CD4-positive, alpha-beta T cell (primary cell): ENCODE measurements at regions of chr5 and their contacts with region 1.

Region 1: DNA sequence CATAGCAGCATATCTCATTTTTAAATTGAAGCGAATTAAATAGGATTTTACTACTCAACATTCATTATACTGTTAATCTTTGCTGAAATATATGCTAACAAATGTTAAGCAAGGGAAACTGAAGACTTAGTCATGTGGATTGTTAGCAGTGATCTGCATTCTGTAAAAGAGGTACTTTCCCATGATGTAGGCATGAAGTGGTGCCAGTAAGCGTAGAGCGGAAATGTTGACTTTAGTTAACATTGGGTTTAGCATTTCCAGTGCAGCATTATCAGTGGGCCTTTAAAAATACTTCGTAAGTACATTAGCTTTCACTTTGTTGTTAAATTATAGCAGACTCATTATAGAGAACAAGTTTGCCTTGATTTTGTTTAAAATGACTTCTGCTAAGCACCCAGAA is 130.3 kb downstream of the CDC42SE2 start:
- DNase-seq: peak in 7 of 14 experiments; percentile 32 to 91 (median 54)
- ATAC-seq: peak; percentile 95
- H3K4me3 ChIP-seq: peak overlapping the region; percentile 2
- H3K4me3 Mint-ChIP-seq: peak overlapping the region; percentile 55
- H3K27ac ChIP-seq: peak overlapping the region; percentile 85 to 92
- H3K27ac Mint-ChIP-seq: peak overlapping the region; percentile 97
- H3K4me1 ChIP-seq: peaks cover 54% of the 10 kb centered on the region
- H3K4me1 Mint-ChIP-seq: peaks cover 95% of the 10 kb centered on the region
- H3K27me3 ChIP-seq: no peaks in the 10 kb centered on the region
- H3K27me3 Mint-ChIP-seq: no peaks in the 10 kb centered on the region
- CTCF ChIP-seq: no peak

Region 2: DNA sequence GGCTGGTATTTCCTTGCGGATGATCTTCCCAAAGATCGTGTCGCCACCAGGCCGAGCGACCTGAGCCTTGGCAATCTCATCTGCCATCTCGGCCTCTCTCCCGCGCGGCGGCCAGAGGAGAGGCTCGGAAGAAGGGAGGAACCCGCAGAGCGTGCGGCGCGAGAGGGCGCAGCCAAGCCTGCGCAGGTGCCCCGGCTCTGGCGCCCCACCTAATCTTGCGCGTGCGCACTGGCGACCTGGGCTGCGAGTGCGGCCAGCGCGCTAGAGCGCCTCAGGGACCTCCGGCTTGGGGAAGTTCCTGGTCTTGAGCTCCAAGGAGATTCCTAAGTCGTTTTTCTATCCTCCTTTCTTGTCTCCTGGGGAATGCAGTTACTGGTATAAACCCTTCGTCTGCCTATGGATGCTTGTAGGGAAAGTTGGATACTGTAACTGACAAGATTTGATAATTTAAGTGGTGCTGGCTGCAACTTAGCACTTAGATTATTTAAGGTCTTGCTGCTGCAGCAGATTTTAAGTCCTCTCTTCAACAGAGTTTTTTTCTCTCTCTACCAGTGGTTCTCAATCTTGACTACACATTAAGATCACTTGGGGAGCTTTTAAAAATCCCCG is 228.9 kb before region 1 on chr5 and contains the start of gene HINT1:
- CTCF ChIA-PET with region 1: interaction called, 3 read pairs
- POLR2A ChIA-PET with region 1: interaction called, 7 read pairs
- intact Hi-C with region 1: loop called in 1 of 2 experiments (anchors 5 kb)
- DNase-seq: peak; percentile 81 to 97 (median 92)
- ATAC-seq: peak; percentile 84
- H3K4me3 ChIP-seq: peak within 1 kb of the TSS; percentile 86
- H3K4me3 Mint-ChIP-seq: peak within 1 kb of the TSS; percentile 97
- H3K27ac ChIP-seq: peak within 1 kb of the TSS; percentile 92 to 93
- H3K27ac Mint-ChIP-seq: peak within 1 kb of the TSS; percentile 88
- H3K4me1 ChIP-seq: peaks cover 28% of the 10 kb centered on the region
- H3K4me1 Mint-ChIP-seq: peaks cover 63% of the 10 kb centered on the region
- H3K27me3 ChIP-seq: no peaks in the 10 kb centered on the region
- H3K27me3 Mint-ChIP-seq: no peaks in the 10 kb centered on the region
- CTCF ChIP-seq: peak; percentile 37
- total RNA-seq, gene HINT1: 257 to 263 TPM

Region 3: DNA sequence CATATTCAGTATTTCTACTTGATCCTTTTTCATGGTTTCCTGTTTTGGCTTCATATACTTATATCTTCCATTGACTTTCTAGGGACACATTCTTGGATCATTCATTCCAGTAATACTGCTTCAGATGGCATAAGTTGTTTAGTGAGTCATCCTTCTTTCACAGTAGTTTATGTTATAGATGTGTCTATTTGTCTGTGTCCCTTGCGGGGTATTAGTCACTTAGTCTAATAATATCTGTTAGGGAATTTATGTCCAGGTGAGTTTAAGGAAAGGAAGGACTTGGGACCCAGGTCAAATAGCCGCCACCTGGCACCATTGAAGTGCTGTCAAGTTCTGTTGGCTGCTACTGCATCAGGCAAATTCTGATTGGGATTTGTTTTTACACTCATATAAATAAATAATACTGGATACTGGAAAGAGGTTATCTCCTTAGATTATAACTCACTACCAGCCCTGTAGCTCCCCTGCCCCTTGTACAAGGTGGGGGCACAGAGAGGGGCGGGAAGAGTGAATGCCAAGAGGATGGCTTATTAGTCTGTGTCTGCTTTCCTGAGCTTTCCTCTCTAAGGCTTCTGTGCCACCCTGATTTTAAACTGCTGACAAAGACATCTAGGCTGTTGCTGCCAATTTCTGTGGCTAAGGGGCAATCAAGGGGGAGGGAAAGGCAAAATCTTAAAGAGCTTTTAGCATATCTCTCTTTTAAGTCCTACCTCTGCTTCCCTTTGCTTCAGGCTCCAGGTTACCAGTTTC is 65.4 kb before region 1 on chr5:
- CTCF ChIA-PET with region 1: no interaction called
- POLR2A ChIA-PET with region 1: no interaction called
- intact Hi-C with region 1: no loop called
- DNase-seq: no peak
- ATAC-seq: peak; percentile 24
- H3K4me3 ChIP-seq: no peak overlapping the region
- H3K4me3 Mint-ChIP-seq: peak overlapping the region; percentile 26
- H3K27ac ChIP-seq: no peak overlapping the region
- H3K27ac Mint-ChIP-seq: peak overlapping the region; percentile 26
- H3K4me1 ChIP-seq: peaks cover 31% of the 10 kb centered on the region
- H3K4me1 Mint-ChIP-seq: peaks cover 84% of the 10 kb centered on the region
- H3K27me3 ChIP-seq: no peaks in the 10 kb centered on the region
- H3K27me3 Mint-ChIP-seq: no peaks in the 10 kb centered on the region
- CTCF ChIP-seq: no peak

Region 4: GRCh38 chr5:131406086-131406485 is 12.0 kb after region 1 on chr5:
- CTCF ChIA-PET with region 1: interaction called, 3 read pairs
- POLR2A ChIA-PET with region 1: interaction called, 12 read pairs
- intact Hi-C with region 1: no loop called
- DNase-seq: no peak
- ATAC-seq: no peak
- H3K4me3 ChIP-seq: no peak overlapping the region
- H3K4me3 Mint-ChIP-seq: no peak overlapping the region
- H3K27ac ChIP-seq: peak overlapping the region in 1 of 2 donors; percentile 19
- H3K27ac Mint-ChIP-seq: peak overlapping the region; percentile 82
- H3K4me1 ChIP-seq: no peaks in the 10 kb centered on the region
- H3K4me1 Mint-ChIP-seq: peaks cover 9% of the 10 kb centered on the region
- H3K27me3 ChIP-seq: no peaks in the 10 kb centered on the region
- H3K27me3 Mint-ChIP-seq: no peaks in the 10 kb centered on the region
- CTCF ChIP-seq: no peak